Cardiac septum (tissue), 1 donor: ENCODE measurements at regions of chr14 and their contacts with region 1.

Region 1: DNA sequence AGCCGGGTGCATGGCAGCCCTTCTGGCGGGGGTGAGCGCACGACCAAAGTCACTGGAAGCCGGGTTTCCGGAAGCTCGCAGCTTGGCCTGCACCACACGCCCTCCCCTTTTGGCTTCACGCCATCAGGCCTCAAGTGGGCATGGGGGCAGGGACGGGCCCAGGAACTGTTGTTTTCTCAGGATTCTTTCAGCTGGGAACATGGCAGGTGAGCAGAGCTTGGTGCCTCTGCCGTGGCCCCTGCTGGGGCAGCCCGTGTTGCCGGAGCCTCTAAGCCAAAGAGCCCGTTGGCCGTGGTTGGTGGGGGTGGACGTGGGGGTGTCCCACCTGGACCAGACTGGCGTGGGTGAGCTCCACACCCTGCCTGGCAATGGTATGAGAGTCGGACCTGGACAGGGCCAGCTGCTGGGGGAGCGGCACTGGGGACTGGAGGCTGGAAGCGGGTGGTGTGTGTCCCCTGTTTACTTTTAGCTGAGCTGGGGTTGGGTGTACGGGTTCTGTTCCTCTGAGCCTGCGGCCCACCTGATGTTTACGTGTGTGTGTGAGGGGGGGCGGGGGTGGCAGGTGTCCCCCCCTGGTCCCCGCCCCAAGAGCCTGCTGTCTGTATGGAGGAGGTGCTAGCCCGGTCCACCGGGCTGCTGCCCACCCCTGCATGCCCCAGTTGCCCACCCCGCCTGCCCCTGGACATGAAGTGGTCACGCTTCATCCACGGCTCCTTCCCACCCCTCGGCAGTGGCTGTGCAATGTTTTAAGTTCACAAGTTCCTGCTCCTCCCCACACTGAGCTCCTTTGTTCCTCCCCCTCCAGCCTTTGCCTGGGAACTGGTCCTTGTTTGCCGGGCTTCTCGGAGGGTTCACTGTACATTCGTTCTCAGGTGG is 28.7 kb upstream of the PLD4 start:
- DNase-seq: no peak

Region 2: DNA sequence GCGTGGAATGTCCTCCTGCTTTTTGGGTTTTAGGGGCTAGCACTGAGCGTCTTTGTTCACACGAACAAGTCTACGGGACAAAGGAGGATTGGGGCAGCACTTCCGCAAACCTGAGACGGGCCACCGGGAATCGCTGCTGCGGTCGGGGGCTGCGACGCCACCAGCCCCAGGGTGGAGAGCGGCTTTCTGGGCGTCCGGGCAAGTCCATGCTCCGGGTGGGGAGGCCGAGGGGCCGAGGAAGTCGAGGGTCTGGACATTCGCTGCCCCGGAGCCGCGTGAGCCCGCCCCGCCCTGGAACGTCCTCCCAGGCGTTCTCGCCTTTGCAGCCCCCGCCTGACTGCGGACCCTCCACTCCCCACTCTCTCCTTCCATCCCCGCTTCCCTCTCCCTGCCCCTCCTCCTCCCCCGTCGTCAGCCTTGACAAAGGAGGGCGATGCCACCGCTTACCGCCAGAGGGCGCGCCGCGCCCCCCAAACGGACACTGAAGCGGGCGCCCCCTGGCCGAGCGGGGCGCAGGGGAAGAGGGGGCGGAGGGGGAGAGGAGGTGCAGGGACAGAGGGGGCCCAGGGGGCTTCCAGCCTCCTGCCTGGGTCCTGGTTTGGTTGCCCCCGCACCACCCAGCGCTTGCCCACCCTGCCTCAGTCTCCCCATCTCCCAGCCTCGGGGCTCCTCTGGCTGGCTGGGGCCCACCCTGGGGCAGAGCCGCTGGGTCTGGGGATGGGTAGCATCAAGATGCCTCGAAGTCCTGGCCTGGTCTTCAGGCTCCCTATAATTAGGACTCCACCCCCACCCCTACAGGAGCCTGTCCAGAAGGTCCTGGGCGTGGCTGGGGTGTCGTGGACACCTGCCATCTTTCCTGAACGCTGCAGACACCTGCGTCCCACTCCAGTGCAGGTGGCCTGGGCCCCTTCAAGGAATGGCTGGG is 245.7 kb before region 1 on chr14:
- intact Hi-C with region 1: no loop called
- DNase-seq: no peak

Region 3: DNA sequence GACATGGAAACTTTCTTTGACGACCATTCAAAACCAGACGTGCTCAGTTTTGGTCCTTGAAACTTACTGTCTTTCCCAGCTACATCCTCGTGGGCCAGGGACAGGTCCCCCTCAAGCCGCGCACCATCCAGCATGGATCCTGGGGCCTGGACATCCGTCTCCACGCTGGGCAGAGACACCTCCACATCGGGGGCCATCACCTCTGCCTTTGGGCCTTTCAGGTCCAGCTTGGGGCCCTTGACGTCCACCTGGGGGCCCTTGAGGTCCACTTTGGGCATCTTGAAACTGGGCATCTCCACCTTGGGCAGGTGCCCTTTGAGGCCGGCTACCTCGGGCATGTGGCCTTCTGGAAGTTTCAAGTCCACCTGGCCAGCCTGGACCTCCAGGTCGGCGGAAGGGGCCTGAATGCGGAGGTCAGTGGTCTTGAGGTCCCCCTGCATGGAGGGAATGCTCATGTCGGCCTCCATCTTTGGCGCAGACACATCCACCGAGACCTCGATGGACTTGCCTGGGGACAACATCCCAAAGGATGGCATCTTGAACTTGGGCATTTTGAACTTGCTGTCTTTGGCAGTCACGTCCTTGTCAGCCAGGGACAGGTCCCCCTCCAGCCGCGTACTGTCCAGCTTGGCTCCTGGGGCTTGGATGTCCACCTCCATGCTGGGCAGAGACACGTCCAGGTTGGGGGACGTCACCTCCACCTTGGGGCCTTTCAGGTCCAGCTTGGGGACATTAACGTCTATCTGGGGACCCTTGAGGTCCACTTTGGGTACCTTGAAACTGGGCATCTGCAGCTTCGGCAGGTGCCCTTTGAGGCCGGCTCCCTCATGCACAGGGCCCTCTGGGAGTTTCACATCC is 45.7 kb after region 1 on chr14:
- intact Hi-C with region 1: no loop called
- DNase-seq: no peak

Region 4: GRCh38 chr14:105045710-105046326 is 149.8 kb after region 1 on chr14:
- intact Hi-C with region 1: loop called (anchors 2 kb)
- DNase-seq: peak; percentile 96